Heart left ventricle (tissue), 16 donors: ENCODE measurements at regions of chr7 and their contacts with region 1.

Region 1: DNA sequence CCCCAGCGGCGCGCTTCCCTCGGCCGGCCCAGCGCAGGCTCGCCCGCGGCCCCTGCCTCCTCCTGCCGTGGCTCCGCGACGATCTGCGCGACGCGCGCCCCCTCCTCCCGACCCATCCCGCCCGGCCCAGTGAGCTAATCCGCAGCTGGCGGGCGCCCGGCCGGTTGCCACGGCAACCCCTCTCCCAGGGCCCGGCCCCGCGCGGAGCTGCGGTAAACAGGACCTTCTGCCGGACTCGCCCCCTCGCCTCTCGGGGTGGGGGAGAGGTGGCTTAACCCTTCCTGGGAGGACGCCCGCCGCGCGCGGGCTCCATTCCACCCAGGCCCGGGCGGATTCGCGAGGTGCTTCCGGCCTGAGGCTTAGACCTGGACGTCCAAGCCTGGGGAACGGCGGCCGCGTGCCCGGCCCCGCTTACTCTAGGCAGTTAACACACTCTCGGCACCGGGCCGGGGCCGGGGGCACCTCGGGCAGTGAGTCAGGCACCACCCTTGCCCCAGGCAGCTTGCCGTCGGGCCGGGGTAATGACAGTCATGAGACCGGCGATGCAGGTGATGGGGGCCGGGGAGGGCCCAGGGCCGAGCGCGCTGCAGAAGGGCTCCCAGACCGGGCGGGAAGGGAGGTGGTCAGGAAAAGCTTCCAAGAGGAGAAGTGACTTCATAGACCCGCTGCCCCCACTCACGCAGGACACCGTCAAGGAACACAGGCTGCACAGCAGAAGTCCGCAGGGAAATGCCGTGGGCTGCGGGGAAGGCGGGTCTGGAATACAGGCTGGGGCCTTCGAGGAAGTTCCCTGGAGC is at the start of gene DENND2A:
- DNase-seq: peak; percentile 83 to 87 (median 86)
- ATAC-seq: peak; percentile 55 to 76 (median 68)
- H3K4me3 ChIP-seq: peak within 1 kb of the TSS; percentile 59 to 87 (median 71)
- H3K27ac ChIP-seq: peak within 1 kb of the TSS; percentile 87 to 98 (median 97)
- H3K4me1 ChIP-seq: peaks cover 0 to 57% (median 34%) of the 10 kb centered on the region in 12 donors
- H3K27me3 ChIP-seq: peaks cover 0 to 29% (median 0%) of the 10 kb centered on the region in 9 donors
- CTCF ChIP-seq: no peak
- POLR2A ChIP-seq: peak in 1 of 2 donors; percentile 20
- total RNA-seq, gene DENND2A: 6.7 to 17.9 (median 10.8) TPM

Region 2: GRCh38 chr7:140451716-140452115 is 189.2 kb before region 1 on chr7:
- intact Hi-C with region 1: no loop called
- DNase-seq: no peak
- ATAC-seq: no peak
- H3K4me3 ChIP-seq: no peak overlapping the region
- H3K27ac ChIP-seq: no peak overlapping the region
- H3K4me1 ChIP-seq: peaks cover 0 to 13% (median 0%) of the 10 kb centered on the region in 12 donors
- H3K27me3 ChIP-seq: no peaks in the 10 kb centered on the region
- CTCF ChIP-seq: no peak
- POLR2A ChIP-seq: no peak

Region 3: GRCh38 chr7:140581411-140581810 is 59.5 kb before region 1 on chr7:
- intact Hi-C with region 1: no loop called
- DNase-seq: no peak
- ATAC-seq: no peak
- H3K4me3 ChIP-seq: no peak overlapping the region
- H3K27ac ChIP-seq: no peak overlapping the region
- H3K4me1 ChIP-seq: peaks cover 0 to 7% (median 0%) of the 10 kb centered on the region in 12 donors
- H3K27me3 ChIP-seq: no peaks in the 10 kb centered on the region
- CTCF ChIP-seq: no peak
- POLR2A ChIP-seq: no peak

Region 4: DNA sequence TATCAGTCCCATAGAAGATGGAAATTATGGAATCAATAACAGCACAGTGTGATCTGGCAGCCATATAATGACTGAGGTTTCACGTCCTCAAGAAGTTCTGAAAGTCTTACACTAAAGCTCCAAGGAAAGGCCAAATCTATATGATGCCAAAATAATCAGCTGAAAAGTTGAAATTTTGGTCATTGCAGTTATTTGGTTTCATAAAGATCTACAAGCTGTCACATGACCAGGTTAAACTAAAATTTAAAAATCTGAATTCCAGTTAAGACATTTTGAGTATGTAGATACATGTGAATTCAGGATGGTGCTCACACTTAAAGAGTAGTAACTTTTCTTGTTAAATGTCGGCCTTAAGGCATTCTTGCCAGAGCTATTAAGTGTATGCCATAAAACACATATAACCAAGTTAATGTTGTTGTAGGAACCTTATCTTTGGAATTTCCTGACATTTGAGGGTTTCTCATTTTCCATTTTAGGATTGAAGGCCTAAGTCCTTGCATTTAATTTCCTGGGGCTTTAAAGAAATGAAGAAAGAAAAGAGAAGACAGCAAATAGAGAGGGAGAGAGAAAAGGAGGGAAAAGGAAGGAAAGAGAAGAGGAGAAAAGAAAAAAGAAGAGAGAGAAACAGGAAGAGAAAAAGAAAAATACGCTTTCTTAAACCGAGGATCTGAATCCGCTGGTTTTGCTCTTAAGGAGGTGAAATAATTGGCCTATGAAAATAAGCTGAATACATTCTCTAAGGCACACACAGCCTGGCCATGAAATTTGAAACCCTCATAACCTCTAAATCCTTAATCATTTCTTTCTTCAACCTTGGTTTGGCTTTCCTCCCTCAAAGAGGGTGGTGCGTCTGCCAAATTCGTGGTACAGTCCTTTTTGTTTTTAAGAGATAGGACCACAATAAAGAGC is 44.2 kb before region 1 on chr7:
- intact Hi-C with region 1: loop called in 5 of 10 experiments (anchors 1 to 10 kb)
- DNase-seq: no peak
- ATAC-seq: no peak
- H3K4me3 ChIP-seq: no peak overlapping the region
- H3K27ac ChIP-seq: peak overlapping the region in 11 of 12 donors; percentile 9 to 63 (median 49)
- H3K4me1 ChIP-seq: peaks cover 0 to 36% (median 8%) of the 10 kb centered on the region in 12 donors
- H3K27me3 ChIP-seq: no peaks in the 10 kb centered on the region
- CTCF ChIP-seq: no peak
- POLR2A ChIP-seq: no peak

Region 5: GRCh38 chr7:140607441-140607989 is 33.4 kb before region 1 on chr7:
- intact Hi-C with region 1: loop called in 5 of 10 experiments (anchors 2 to 5 kb)
- DNase-seq: peak; percentile 76 to 88 (median 79)
- ATAC-seq: peak; percentile 70 to 91 (median 87)
- H3K4me3 ChIP-seq: no peak overlapping the region
- H3K27ac ChIP-seq: peak overlapping the region in 11 of 12 donors; percentile 15 to 81 (median 53)
- H3K4me1 ChIP-seq: peaks cover 7 to 51% (median 30%) of the 10 kb centered on the region in 12 donors
- H3K27me3 ChIP-seq: no peaks in the 10 kb centered on the region
- CTCF ChIP-seq: no peak
- POLR2A ChIP-seq: no peak